AG04450 (cell line): ENCODE measurements at regions of chr19 and their contacts with region 1.

Region 1: GRCh38 chr19:21655540-21656126 is 111.7 kb downstream of the ZNF100 start:
- DNase-seq: no peak
- H3K4me3 ChIP-seq: no peak overlapping the region
- H3K27ac ChIP-seq: no peak overlapping the region
- H3K27me3 ChIP-seq: no peaks in the 10 kb centered on the region
- CTCF ChIP-seq: no peak

Region 2: DNA sequence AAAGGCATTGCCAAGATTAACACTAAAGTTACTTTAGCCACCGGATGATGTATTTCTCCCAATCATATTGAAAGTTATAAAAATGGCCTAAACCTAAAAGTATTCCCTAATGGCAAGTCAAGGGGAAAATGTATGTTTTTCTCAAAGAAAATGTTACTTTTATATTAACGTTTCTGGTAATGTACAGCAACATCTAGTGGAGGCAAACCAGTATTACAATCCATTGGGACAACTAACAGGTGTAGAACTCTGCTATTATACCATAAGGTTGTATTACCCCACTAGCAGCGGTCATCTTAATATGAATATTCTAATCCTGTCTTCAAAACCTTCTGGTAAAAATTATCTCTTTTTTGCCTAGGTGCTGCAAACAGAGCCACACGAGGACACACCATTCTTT is 42.6 kb after region 1 on chr19:
- CTCF ChIA-PET with region 1: interaction called, 10 read pairs
- POLR2A ChIA-PET with region 1: no interaction called
- DNase-seq: no peak
- H3K4me3 ChIP-seq: no peak overlapping the region
- H3K27ac ChIP-seq: no peak overlapping the region
- H3K27me3 ChIP-seq: no peaks in the 10 kb centered on the region
- CTCF ChIP-seq: peak; percentile 23; the same call in 1 of the 2 replicates